SK-N-SH (cell line): ENCODE measurements at regions of chr2 and their contacts with region 1.

Region 1: DNA sequence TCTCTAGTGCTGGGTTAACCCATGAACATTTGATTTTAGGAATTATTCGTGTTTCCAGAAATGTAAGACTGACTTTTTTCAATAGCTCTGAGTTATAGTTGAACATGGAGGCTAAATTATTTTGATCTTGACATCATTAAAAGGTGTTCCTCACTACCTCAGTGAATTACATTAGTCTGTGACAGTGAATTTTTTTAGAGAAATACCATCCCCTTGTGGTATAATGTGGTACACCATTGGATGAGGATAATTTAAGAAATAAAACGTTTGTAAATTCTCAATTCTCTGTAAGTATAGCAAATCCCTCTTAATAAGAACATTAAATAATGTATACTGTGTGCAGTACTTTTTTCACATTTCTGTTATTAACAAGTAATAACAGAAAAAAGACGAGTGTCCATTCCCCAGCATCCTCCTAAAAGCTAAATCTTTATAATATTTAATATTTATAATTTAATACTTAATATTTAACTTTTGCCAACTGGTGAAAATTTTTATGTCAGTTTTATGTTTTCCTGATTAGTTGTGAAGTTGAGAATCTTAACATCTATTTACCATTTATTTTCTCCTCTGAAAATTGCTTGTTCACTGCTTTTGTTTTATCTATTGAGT is 70.3 kb upstream of the CWC22 start:
- DNase-seq: peak; percentile 24
- H3K4me3 ChIP-seq: no peak overlapping the region; a peak in 1 of 4 replicates
- H3K27ac ChIP-seq: no peak overlapping the region
- H3K4me1 ChIP-seq: no peaks in the 10 kb centered on the region
- H3K27me3 ChIP-seq: no peaks in the 10 kb centered on the region
- CTCF ChIP-seq: peak; percentile 93
- EP300 ChIP-seq: no peak
- RAD21 ChIP-seq: peak; percentile 77

Region 2: GRCh38 chr2:180063494-180064092 is 13.8 kb before region 1 on chr2:
- CTCF ChIA-PET with region 1: interaction called, 12 read pairs
- POLR2A ChIA-PET with region 1: no interaction called
- DNase-seq: no peak
- H3K4me3 ChIP-seq: no peak overlapping the region
- H3K27ac ChIP-seq: no peak overlapping the region
- H3K4me1 ChIP-seq: no peaks in the 10 kb centered on the region
- H3K27me3 ChIP-seq: no peaks in the 10 kb centered on the region
- CTCF ChIP-seq: no peak
- EP300 ChIP-seq: no peak
- RAD21 ChIP-seq: no peak

Region 3: DNA sequence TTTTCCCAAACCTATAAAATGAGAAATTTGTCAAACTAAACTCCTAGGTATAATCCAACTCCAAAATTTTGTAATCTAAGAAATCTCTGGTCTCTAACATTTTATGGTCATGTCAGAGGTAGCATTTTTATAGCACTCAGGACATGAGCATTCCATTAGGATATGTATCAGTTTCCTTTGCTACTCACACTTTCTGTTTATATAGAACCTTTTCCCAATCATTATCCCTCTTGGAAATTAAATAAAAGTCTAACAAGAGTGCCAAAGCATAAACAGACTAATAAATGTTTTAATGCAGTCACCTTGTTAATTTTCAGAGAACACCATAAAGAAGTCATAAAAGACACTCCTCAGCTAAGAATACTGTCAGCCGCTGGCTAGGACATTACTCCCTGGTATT is 229.7 kb after region 1 on chr2:
- CTCF ChIA-PET with region 1: no interaction called
- POLR2A ChIA-PET with region 1: no interaction called
- DNase-seq: no peak
- H3K4me3 ChIP-seq: no peak overlapping the region
- H3K27ac ChIP-seq: no peak overlapping the region
- H3K4me1 ChIP-seq: no peaks in the 10 kb centered on the region
- H3K27me3 ChIP-seq: no peaks in the 10 kb centered on the region
- CTCF ChIP-seq: no peak
- EP300 ChIP-seq: no peak
- RAD21 ChIP-seq: no peak